ENCODE measurements at regions of chr7 and their contacts with region 1.

Region 1: DNA sequence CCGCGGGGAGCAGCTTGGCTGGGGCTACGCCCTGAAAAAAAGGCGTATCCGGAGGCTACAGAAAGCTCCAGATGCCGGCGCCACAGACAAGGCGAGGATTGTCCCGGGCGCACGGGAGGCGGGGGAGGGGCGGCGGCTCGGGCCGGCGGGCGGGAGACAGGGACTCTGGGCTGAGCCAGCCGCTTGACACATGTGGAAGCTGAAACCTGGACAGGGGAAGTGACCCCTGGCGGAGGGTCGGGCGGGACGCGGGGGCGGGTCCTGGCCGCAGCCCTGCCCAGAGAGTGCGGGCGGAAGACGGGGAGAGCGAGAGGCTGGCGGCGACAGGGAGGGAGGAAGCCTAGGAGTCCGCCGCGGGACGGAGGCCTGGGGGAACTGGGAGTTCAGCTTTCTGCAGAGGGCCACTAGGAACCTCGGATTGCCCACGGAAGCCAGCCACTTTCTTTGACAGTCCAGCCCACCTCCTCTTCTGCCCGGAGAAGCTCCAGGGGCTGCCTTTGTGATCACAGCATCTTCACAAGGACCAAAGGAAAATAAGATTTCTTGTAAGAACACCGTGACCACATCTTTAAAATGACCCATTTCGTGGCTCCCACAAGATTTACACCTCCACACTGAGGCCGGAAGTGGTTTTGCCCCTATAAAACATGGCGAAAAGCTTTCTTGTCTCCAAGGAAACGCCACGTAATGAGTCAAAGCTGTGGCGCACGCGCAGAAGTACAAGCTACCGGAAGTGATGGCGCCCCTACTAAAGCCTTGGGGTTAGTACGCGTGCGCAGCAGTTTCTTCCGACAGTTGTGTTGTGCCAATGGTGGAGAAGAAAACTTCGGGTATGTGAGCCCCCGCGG is at the starts of genes PLOD3 and ZNHIT1:
- DNase-seq: peak; percentile 96 to 98
- ATAC-seq: peak; percentile 92 to 97 (median 94)
- H3K4me3 ChIP-seq: peak within 1 kb of the TSS; percentile 74 to 98 (median 88)
- H3K27ac ChIP-seq: peak within 1 kb of the TSS; percentile 49 to 99 (median 94)
- H3K4me1 ChIP-seq: peaks cover 0 to 48% (median 40%) of the 10 kb centered on the region in 9 donors
- H3K27me3 ChIP-seq: no peaks in the 10 kb centered on the region
- CTCF ChIP-seq: peak in 6 of 9 donors; percentile 22 to 60 (median 42)
- total RNA-seq, gene PLOD3: 27.1 to 56.4 (median 36.0) TPM
- total RNA-seq, gene ZNHIT1: 45.4 to 59.3 (median 49.8) TPM

Region 2: GRCh38 chr7:101173752-101174244 is 43.8 kb before region 1 on chr7:
- intact Hi-C with region 1: no loop called
- DNase-seq: no peak
- ATAC-seq: peak in 1 of 8 donors; percentile 16
- H3K4me3 ChIP-seq: peak overlapping the region in 4 of 10 donors; percentile 6 to 24 (median 16)
- H3K27ac ChIP-seq: no peak overlapping the region
- H3K4me1 ChIP-seq: peaks cover 7 to 38% (median 21%) of the 10 kb centered on the region in 9 donors
- H3K27me3 ChIP-seq: peaks cover 44 to 100% (median 100%) of the 10 kb centered on the region in 7 donors
- CTCF ChIP-seq: no peak

Region 3: DNA sequence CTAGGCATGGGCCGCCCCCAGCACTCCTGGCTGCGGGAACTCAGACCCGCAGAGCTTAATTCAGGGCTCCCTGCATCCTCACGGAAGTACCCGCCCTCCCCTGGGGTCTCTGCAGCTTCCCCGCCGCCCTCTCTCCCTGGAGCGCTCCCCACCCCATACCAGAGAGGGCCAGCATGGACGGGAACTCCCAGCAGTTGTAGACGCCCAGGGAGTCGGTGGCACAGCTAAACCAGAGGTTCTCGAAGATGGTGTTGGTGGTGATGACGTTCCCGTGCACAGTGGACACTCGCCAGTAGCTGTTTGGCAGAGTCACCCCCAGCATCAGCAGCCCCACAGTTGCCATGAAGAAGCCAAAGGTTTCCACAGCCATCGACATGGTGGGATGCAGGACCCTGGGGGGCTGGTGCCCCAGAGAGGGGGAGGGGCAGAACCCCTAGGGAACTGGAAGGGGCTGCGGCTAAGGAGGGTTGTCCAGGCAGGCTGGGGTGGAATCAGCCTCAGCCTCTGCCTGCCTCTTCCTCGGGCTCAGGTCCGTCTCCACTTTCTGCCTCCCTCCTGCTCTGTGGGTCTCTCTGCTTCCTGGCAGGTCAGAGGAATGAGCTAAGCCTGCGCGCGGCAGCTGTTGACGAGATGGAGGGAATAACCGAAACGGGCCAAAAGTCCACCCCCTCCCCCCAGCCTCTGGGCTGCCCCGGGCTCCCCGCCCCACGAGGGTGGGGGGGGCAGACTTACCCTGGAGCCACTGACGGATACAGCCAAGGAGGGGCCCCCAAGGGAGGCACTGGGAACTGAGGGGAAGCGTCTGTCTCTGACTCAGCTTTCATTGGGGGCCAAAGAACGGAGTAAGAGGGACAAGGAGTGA is 19.8 kb after region 1 on chr7 and contains the start of gene CLDN15:
- intact Hi-C with region 1: loop called in 1 of 10 experiments (anchors 2 kb)
- DNase-seq: peak; percentile 85 to 88
- ATAC-seq: peak; percentile 50 to 89 (median 80)
- H3K4me3 ChIP-seq: peak within 1 kb of the TSS in 8 of 10 donors; percentile 6 to 30 (median 16)
- H3K27ac ChIP-seq: peak within 1 kb of the TSS; percentile 67 to 90 (median 80)
- H3K4me1 ChIP-seq: peaks cover 15 to 61% (median 47%) of the 10 kb centered on the region in 9 donors
- H3K27me3 ChIP-seq: no peaks in the 10 kb centered on the region
- CTCF ChIP-seq: no peak
- total RNA-seq, gene CLDN15: 1.2 to 3.3 (median 1.7) TPM

Region 4: DNA sequence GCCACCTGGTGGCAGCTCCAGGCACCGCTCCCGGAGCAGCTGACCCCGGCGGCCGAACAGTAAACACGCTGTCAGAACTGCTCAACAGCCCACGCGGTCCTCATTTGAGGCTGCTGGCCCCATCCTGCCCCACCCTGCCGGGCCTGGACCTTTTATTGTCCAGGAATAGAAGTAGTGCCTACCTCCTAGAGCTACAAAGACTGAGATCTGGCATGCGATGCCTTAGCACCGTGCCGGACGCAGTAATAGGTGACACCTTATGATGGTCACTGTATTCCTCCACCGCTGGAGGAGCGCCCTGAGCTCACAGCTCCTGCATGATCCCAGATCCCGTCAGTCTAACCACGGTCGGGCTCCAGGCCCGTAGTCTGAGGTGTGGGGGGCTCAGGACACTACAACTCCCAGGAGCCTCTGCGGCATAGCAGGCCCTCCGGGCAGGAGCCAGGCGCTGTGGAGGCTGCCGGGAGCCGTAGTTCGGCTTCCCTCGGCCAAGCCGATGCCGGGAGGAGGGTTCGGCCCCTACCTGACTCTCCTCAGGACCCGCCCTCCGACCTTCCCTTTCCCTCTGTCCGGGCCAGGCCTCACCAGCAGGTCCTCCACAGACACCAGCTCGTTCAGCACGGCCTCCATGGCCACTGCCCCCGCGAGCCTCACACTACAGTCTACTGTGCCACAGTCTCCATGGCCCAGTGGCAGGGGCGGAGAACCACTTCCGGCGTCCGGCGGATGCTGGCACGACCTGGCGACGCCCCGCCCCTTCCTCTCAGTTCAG is 26.9 kb after region 1 on chr7 and contains the start of gene FIS1:
- intact Hi-C with region 1: loop called in 7 of 10 experiments (anchors 1 to 2 kb)
- DNase-seq: peak; percentile 92 to 95
- ATAC-seq: peak; percentile 97 to 99 (median 99)
- H3K4me3 ChIP-seq: peak within 1 kb of the TSS; percentile 73 to 89 (median 82)
- H3K27ac ChIP-seq: peak within 1 kb of the TSS; percentile 91 to 98 (median 95)
- H3K4me1 ChIP-seq: peaks cover 11 to 64% (median 49%) of the 10 kb centered on the region in 9 donors
- H3K27me3 ChIP-seq: no peaks in the 10 kb centered on the region
- CTCF ChIP-seq: peak; percentile 89 to 99 (median 95)
- total RNA-seq, gene FIS1: 251 to 350 (median 292) TPM